ENCODE measurements at regions of chr17 and their contacts with region 1.

Region 1: DNA sequence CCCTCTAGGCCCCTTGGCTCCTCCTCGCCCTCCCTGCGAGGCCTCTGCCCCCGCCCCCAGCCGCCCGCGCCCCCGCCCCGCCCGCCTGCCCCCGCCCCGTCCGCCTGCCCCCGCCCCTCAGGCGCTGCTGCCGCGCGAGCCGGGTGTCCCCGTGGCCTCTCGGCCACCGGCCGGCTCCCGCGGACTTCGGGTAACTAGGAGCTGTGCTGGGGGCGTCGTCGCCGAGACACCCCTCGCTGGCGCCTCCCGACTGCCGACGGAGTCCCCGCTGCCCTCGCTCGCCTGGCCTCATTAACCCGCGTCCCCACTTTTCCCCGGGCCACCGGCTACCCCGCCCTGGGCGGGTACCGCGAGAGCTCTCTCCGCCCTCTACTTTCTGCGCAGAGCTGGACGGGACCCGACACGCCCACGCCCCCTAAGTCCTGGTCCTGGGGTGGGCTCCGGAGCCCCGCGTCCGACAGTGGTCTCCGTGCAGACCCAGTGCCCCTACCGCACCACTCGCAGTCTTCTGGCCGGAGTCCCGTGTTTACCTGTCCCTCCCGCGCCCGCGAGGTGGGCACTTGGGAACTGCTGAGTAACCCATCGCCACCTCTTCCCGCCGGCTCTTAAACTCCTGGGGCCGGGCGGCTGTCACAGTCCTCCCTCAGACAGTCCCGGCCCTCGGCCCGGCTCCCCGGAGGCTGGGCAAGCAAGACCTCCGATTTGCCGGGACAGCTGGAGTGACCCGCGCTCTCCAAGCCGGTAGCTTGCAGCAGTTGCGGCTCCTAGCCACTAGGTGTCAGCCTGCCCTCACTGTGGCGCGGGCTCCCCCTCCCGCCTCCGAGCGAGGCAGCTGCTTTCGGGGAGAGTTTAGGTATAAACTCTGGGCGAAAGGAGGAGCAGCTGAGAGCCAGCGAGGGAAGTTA is at the start of gene TLCD1:
- DNase-seq: peak; percentile 91
- H3K4me3 Mint-ChIP-seq: peak within 1 kb of the TSS; percentile 97
- H3K27ac Mint-ChIP-seq: peak within 1 kb of the TSS; percentile 98
- H3K4me1 Mint-ChIP-seq: peaks cover 67% of the 10 kb centered on the region
- H3K27me3 Mint-ChIP-seq: no peaks in the 10 kb centered on the region
- total RNA-seq, gene TLCD1: 9.5 and 11.5 TPM in 2 replicates

Region 2: DNA sequence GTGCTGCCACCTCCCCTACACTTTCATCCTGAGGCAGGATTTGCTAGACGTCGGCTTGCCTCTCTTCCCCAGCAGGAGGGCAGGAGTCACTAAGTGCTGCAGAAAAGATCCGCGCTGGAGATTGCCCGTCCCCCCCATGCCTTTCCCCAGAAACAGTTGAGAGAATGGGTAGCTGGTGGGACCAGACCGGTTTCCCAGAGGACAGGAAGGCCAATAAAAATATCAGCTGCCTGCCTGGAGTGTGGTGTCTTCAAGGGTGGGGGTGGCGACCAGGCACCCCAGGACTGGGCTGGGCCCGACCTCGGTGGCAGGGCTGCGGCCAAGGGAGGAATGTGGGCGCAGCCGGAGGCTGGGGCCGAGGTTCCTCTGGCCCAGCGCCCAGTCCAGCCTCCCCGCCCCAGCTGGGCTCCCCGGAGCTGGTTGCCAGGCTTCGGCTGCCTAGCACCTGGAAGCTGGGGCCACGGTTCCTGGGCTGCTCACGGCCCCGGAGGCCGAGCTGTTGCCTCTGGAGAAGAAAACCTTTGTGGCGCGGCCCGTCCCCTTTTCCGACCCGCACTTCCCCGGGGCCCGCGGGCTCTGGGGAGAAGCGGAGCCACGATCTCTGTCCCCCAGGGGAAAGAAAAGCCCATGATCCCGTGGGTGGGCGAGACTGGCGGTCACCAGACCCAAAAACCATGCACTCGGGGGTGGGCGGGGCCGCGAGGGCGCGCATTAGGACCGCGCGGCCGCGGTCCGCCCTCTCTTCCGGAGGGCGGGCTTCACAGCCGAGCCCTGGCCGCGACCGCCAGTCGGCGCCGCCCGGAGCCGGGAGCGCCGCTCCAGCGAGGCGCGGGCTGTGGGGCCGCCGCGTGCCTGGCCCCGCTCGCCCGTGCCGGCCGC is 17.0 kb after region 1 on chr17 and contains the start of gene TRAF4:
- intact Hi-C with region 1: loop called (anchors 1 kb)
- DNase-seq: peak; percentile 72
- H3K4me3 Mint-ChIP-seq: peak within 1 kb of the TSS; percentile 90
- H3K27ac Mint-ChIP-seq: peak within 1 kb of the TSS; percentile 82
- H3K4me1 Mint-ChIP-seq: peaks cover 34% of the 10 kb centered on the region
- H3K27me3 Mint-ChIP-seq: no peaks in the 10 kb centered on the region
- total RNA-seq, gene TRAF4: 178 and 182 TPM in 2 replicates

Region 3: DNA sequence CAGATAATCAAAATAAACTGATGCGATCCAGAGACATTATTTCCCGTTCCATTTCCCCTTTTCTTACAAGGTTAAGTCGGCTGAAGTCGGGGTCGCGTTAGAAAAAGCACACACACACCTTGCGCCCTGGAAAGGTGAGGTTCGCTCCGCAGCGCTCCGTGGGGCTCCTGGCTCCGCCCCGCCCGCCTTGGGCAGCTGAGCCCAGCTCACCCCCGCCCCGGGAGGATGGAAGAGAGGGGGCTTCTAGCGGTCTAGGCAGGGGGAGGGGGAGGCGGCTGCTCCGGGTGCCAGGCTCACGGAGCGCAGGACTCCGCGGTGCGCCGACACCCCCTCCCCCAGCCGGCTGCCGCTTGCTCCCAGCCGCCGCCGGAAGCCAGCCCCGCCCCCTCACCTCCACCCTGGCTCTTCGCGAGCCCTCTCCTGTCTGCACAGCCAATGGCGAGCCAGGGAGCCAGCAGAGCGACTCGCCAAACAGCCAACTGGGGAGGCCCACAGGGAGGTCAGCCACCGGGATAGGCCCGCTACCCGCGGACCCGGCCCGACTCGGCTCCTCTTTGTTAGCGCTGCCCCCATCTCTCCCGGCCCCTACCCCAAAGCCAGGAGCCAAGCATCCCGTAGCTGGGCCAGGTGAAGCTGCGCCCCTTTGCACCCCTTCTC is 85.7 kb after region 1 on chr17:
- intact Hi-C with region 1: loop called (anchors 1 kb)
- DNase-seq: peak; percentile 95
- H3K4me3 Mint-ChIP-seq: peak overlapping the region; percentile 91
- H3K27ac Mint-ChIP-seq: peak overlapping the region; percentile 97
- H3K4me1 Mint-ChIP-seq: peaks cover 43% of the 10 kb centered on the region
- H3K27me3 Mint-ChIP-seq: no peaks in the 10 kb centered on the region

Region 4: DNA sequence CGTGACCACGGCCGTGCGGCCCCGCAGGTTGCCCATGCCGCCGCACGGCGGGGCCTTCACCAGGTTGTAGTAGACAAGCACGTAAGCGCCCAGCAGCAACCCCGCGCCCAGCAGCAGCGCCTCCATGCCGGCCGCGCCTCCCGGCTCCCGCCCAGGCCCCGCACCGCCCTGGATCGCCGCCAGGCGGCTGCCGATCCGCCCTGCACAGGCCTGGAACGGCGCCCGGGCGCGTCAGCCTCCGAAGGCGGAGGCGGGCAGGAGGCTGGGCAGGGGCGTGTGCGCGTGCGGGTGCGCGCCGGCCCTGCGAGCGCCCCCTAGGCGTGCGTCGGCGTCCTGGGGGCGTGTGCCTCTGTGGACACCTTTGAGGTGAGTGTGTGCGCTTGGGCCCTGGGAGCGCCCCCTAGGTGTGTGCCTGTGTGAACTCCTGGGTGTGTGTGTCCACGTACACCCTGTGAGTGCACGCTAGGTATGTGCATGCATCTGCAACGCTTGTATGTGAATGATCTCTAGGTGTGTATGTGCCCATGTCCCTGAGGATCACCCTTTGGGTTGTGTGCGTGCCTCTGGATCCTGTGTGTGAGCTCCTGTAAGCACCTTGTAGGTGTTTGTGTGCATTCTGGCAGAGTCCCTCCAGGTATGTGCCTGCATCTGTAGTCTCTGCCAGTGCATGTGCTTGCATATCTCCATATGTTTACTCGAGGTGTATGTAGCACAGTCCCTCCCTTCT is 176.5 kb after region 1 on chr17 and contains the start of gene DHRS13:
- intact Hi-C with region 1: loop called (anchors 1 kb)
- DNase-seq: peak; percentile 93
- H3K4me3 Mint-ChIP-seq: peak within 1 kb of the TSS; percentile 91
- H3K27ac Mint-ChIP-seq: peak within 1 kb of the TSS; percentile 79
- H3K4me1 Mint-ChIP-seq: peaks cover 39% of the 10 kb centered on the region
- H3K27me3 Mint-ChIP-seq: no peaks in the 10 kb centered on the region
- total RNA-seq, gene DHRS13: 34.6 and 34.9 TPM in 2 replicates

Region 5: GRCh38 chr17:29116804-29117772 is 390.6 kb after region 1 on chr17:
- intact Hi-C with region 1: loop called (anchors 2 kb)
- DNase-seq: peak; percentile 59
- H3K4me3 Mint-ChIP-seq: no peak overlapping the region
- H3K27ac Mint-ChIP-seq: no peak overlapping the region
- H3K4me1 Mint-ChIP-seq: no peaks in the 10 kb centered on the region
- H3K27me3 Mint-ChIP-seq: no peaks in the 10 kb centered on the region